T-cell (primary cell): ENCODE measurements at regions of chrX and their contacts with region 1.

Region 1: GRCh38 chrX:12946838-12947544 is 27.9 kb upstream of the TMSB4X start:
- DNase-seq: peak; percentile 36 to 86 (median 67)
- ATAC-seq: peak; percentile 20 to 39 (median 30)
- H3K4me3 ChIP-seq: no peak overlapping the region
- H3K4me3 Mint-ChIP-seq: peak overlapping the region; percentile 40 to 82 (median 54)
- H3K27ac ChIP-seq: peak overlapping the region; percentile 94
- H3K27ac Mint-ChIP-seq: peak overlapping the region; percentile 92 to 96
- H3K4me1 ChIP-seq: peaks cover 40 to 51% of the 10 kb centered on the region in 2 experiments
- H3K4me1 Mint-ChIP-seq: peaks cover 54 to 58% (median 55%) of the 10 kb centered on the region in 3 donors
- H3K27me3 ChIP-seq: no peaks in the 10 kb centered on the region
- H3K27me3 Mint-ChIP-seq: peaks cover 0 to 27% of the 10 kb centered on the region in 2 donors

Region 2: GRCh38 chrX:11609109-11609730 is 1337.8 kb before region 1 on chrX:
- CTCF ChIA-PET with region 1: no interaction called
- POLR2A ChIA-PET with region 1: no interaction called
- DNase-seq: no peak
- ATAC-seq: no peak
- H3K4me3 ChIP-seq: no peak overlapping the region
- H3K4me3 Mint-ChIP-seq: no peak overlapping the region
- H3K27ac ChIP-seq: no peak overlapping the region
- H3K27ac Mint-ChIP-seq: no peak overlapping the region
- H3K4me1 ChIP-seq: no peaks in the 10 kb centered on the region
- H3K4me1 Mint-ChIP-seq: no peaks in the 10 kb centered on the region
- H3K27me3 ChIP-seq: no peaks in the 10 kb centered on the region
- H3K27me3 Mint-ChIP-seq: peaks cover 0 to 35% of the 10 kb centered on the region in 2 donors

Region 3: DNA sequence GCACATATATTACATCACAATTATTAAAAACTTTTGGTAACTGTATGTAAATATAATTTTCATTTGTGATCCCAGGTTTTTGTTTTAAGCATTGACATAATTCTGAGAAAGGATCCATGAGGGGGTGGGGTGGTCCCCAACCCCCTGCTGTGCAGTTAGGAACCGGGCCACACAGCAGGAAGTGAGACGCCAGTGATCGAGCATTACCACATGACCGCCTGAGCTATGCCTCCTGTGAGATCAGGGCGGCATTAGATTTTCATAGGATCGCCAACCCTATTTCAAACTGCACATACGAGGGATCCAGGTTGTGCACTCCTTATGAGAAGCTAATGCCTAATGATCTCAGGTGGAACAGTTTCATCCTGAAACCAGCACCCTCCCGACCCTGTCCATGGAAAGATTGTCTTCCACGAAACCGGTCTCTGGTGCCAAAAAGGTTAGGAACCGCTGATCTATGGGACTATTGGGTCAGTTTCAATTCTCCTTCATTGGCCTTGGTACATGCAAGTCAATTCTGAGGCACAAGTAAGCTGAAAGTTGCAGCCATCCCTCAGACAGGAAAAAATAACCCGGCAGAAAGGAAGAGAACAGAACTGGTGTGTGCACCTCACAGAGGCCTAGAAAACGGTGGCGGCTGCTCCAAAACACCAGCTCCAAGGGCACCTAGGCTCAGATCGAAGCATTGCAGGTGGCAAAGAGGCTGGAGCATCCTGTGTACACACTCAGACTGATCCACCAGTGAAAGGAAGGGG is 20.9 kb after region 1 on chrX:
- CTCF ChIA-PET with region 1: interaction called, 10 to 44 read pairs
- POLR2A ChIA-PET with region 1: interaction called, 4 to 5 read pairs
- DNase-seq: peak in 2 of 35 experiments; percentile 41 to 63
- ATAC-seq: peak in 3 of 4 experiments; percentile 57 to 60 (median 58)
- H3K4me3 ChIP-seq: peak overlapping the region in 1 of 2 donors; percentile 17
- H3K4me3 Mint-ChIP-seq: peak overlapping the region; percentile 66 to 80 (median 74)
- H3K27ac ChIP-seq: peak overlapping the region; percentile 92
- H3K27ac Mint-ChIP-seq: peak overlapping the region; percentile 97 to 99
- H3K4me1 ChIP-seq: peaks cover 20 to 51% of the 10 kb centered on the region in 2 experiments
- H3K4me1 Mint-ChIP-seq: peaks cover 50 to 61% (median 57%) of the 10 kb centered on the region in 3 donors
- H3K27me3 ChIP-seq: no peaks in the 10 kb centered on the region
- H3K27me3 Mint-ChIP-seq: peaks cover 0 to 17% of the 10 kb centered on the region in 2 donors

Region 4: GRCh38 chrX:13029341-13029740 is 82.3 kb after region 1 on chrX:
- CTCF ChIA-PET with region 1: interaction called, 3 to 13 read pairs
- POLR2A ChIA-PET with region 1: no interaction called
- DNase-seq: peak in 11 of 35 experiments; percentile 4 to 43 (median 10)
- ATAC-seq: peak in 3 of 4 experiments; percentile 41 to 46 (median 45)
- H3K4me3 ChIP-seq: no peak overlapping the region
- H3K4me3 Mint-ChIP-seq: peak overlapping the region in 2 of 3 donors; percentile 6 to 64
- H3K27ac ChIP-seq: peak overlapping the region; percentile 67
- H3K27ac Mint-ChIP-seq: peak overlapping the region; percentile 94 to 99
- H3K4me1 ChIP-seq: peaks cover 49 to 51% of the 10 kb centered on the region in 2 experiments
- H3K4me1 Mint-ChIP-seq: peaks cover 71 to 81% (median 75%) of the 10 kb centered on the region in 3 donors
- H3K27me3 ChIP-seq: no peaks in the 10 kb centered on the region
- H3K27me3 Mint-ChIP-seq: peaks cover 0 to 46% of the 10 kb centered on the region in 2 donors

Region 5: DNA sequence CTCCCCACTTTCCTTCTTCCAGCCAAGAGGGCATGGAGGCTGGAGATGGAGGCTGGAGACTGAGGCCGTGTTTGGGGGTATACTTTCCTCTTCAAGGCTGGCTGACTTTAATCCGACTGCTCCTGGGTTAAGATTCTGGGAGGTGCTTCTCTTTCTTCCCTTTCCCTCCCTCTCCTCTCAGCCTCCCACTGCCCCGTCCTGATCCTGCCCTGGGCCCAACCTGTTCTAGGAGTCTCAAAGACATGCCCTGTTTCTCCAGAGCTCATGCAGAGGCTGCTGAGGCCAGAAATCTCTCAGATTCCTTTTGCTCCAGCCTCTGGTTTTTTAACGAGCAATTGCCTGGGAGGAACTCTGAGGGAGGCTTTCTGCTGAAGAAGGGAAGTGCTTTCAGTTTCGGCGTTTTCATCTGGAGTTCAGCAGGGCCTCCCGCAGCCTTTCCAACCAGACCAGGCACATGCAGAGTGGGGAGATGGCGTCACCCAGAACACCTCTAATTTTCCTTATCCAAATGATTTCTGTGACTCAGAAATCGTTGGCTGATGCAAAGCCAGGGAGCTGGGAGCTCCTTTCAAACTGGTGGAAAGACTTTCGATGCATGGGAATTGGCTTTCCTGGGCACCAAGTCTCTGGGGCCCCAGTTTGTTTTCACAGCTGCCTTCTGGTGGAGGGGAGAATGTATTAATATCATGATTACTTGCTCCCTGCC is 131.9 kb after region 1 on chrX:
- CTCF ChIA-PET with region 1: interaction called, 7 to 12 read pairs
- POLR2A ChIA-PET with region 1: interaction called in 1 of 2 experiments, 5 read pairs
- DNase-seq: peak in 1 of 35 experiments; percentile 43
- ATAC-seq: no peak
- H3K4me3 ChIP-seq: peak overlapping the region in 1 of 2 donors; percentile 10
- H3K4me3 Mint-ChIP-seq: peak overlapping the region; percentile 51 to 77 (median 54)
- H3K27ac ChIP-seq: peak overlapping the region; percentile 85
- H3K27ac Mint-ChIP-seq: peak overlapping the region; percentile 97 to 99
- H3K4me1 ChIP-seq: peaks cover 33 to 64% of the 10 kb centered on the region in 2 experiments
- H3K4me1 Mint-ChIP-seq: peaks cover 90 to 91% (median 91%) of the 10 kb centered on the region in 3 donors
- H3K27me3 ChIP-seq: no peaks in the 10 kb centered on the region
- H3K27me3 Mint-ChIP-seq: peaks cover 0 to 25% of the 10 kb centered on the region in 2 donors

Region 6: GRCh38 chrX:13482746-13483145 is 535.8 kb after region 1 on chrX:
- CTCF ChIA-PET with region 1: interaction called, 50 to 92 read pairs
- POLR2A ChIA-PET with region 1: interaction called in 1 of 2 experiments, 4 read pairs
- DNase-seq: no peak
- ATAC-seq: no peak
- H3K4me3 ChIP-seq: no peak overlapping the region
- H3K4me3 Mint-ChIP-seq: no peak overlapping the region
- H3K27ac ChIP-seq: no peak overlapping the region
- H3K27ac Mint-ChIP-seq: no peak overlapping the region
- H3K4me1 ChIP-seq: peaks cover 3 to 20% of the 10 kb centered on the region in 2 experiments
- H3K4me1 Mint-ChIP-seq: peaks cover 13 to 40% (median 24%) of the 10 kb centered on the region in 3 donors
- H3K27me3 ChIP-seq: no peaks in the 10 kb centered on the region
- H3K27me3 Mint-ChIP-seq: peaks cover 0 to 54% of the 10 kb centered on the region in 2 donors

Region 7: DNA sequence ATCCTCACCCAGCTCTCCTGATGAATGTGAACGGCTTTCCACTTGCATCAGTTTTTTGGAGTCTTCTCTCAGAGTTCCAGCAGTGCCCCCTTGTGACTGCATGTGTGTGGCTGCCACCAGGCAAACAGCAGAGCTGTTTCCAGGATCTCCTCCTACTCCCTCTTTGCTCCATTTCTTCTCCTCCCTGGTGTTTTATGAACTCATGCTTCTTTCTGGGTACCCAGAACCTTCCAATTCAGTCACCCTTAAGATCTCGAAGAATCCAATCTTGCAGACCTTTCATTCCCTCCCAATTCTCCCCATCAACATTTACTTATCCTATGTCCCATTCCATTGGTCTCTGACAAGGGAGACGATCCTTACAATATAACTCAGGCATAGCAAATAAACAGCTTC is 699.2 kb after region 1 on chrX:
- CTCF ChIA-PET with region 1: interaction called in 1 of 2 experiments, 10 read pairs
- POLR2A ChIA-PET with region 1: no interaction called
- DNase-seq: peak in 16 of 35 experiments; percentile 3 to 48 (median 21)
- ATAC-seq: peak in 2 of 4 experiments; percentile 36 to 52
- H3K4me3 ChIP-seq: no peak overlapping the region
- H3K4me3 Mint-ChIP-seq: no peak overlapping the region
- H3K27ac ChIP-seq: no peak overlapping the region
- H3K27ac Mint-ChIP-seq: no peak overlapping the region
- H3K4me1 ChIP-seq: no peaks in the 10 kb centered on the region
- H3K4me1 Mint-ChIP-seq: peaks cover 0 to 15% (median 8%) of the 10 kb centered on the region in 3 donors
- H3K27me3 ChIP-seq: no peaks in the 10 kb centered on the region
- H3K27me3 Mint-ChIP-seq: peaks cover 0 to 23% of the 10 kb centered on the region in 2 donors